Thyroid gland (tissue), 4 donors: ENCODE measurements at regions of chr17 and their contacts with region 1.

Region 1: DNA sequence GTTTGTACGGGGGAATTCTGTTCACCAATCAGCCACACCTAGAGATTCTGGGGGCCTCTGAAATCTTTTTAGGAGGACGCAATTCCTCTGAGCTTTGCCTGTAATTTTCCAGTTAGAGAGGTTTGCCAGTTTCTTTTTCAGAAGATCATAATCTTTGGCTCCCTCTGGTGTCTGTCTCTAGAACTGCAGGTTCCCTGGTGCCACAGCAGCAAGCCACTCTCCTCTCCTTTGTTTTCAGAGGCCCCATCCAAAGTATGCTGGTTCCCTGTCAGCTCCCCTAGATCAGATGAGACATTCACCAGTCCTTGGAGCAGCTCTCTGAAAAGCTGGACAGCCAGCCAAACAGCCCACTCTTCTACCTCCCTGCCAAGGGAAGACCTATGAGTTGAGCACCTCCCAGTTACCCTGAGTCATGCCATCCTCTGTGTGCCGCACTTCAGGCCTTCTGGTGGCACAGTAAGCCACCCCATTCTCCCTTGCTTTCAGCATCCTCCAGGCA is 36.1 kb downstream of the RNF112 start:
- DNase-seq: peak; percentile 69
- H3K4me3 ChIP-seq: no peak overlapping the region
- H3K27ac ChIP-seq: peak overlapping the region in 2 of 3 donors; percentile 21 to 22
- H3K4me1 ChIP-seq: no peaks in the 10 kb centered on the region
- H3K27me3 ChIP-seq: no peaks in the 10 kb centered on the region
- CTCF ChIP-seq: peak; percentile 80 to 96 (median 92)
- POLR2A ChIP-seq: no peak

Region 2: DNA sequence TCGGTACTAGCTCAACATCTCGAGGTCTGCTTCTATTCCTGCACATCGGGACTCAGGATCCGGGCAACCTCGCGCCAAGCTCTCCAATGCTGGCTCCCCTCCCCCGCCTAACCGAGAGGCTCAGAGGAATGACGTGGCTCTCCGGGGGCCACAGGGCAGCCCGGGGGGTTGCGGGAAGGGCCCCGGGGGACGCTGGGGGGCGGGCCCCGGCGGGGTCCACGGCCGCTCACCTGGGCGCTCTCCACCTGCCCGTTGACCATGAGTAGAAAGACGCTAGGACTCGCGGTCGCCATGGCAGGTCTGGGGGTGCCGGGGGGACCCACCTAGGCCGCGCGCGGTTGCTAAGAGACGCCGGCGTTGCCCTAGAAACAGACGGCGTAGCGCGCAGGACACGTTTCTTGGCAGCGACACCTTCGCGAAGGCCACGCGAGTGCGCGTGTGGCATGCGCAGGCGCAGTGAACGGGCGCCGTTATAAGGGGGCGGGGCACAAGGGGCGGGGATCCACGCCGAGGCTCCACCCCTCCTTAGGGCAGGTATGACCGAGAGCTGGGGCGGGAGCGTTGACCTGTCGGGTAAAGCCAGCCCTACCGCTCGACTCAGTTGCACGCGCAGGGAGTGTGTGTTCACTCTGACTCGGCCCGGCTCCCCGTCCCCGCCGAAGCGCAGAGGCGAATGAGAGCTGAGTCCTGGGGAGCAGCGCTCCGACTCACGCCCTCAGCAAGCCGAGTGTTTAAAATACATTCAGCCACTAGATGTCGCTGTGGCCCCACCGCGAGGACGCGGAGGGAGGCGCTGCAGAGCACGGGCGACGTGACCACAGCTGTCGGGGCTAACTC is 84.6 kb before region 1 on chr17 and contains the start of gene B9D1:
- intact Hi-C with region 1: loop called (anchors 5 kb)
- DNase-seq: peak; percentile 93 to 94
- H3K4me3 ChIP-seq: peak within 1 kb of the TSS; percentile 43 to 66 (median 63)
- H3K27ac ChIP-seq: peak within 1 kb of the TSS; percentile 75 to 93 (median 92)
- H3K4me1 ChIP-seq: peaks cover 12 to 13% of the 10 kb centered on the region in 2 donors
- H3K27me3 ChIP-seq: no peaks in the 10 kb centered on the region
- CTCF ChIP-seq: peak in 5 of 6 experiments; percentile 98 to 100 (median 99)
- POLR2A ChIP-seq: peak in 1 of 2 donors; percentile 70
- total RNA-seq, gene B9D1: 45.0 to 104 (median 90.3) TPM

Region 3: DNA sequence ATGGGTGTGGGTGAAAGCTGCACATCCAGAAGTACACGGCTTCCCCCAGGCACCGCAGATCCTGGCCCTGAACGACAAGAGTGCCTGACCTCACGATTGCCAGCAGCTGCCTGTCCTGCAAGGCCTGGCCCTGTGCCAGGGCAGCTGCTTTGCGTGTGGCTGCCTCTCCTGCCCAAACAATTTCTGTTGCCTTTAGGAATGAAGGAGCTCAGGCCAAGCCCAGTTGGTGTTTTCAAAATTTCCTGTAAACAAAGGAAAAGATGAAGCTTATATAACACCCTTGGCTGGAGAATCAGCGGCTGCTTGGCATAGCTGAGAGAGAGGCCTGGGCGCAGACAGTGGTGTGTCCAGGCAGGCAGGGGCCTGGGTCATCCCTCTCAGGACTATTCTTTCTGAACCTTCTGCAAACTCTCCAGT is 281.0 kb after region 1 on chr17:
- intact Hi-C with region 1: no loop called
- DNase-seq: peak; percentile 97 to 98
- H3K4me3 ChIP-seq: no peak overlapping the region
- H3K27ac ChIP-seq: peak overlapping the region; percentile 97 to 99 (median 97)
- H3K4me1 ChIP-seq: peaks cover 25 to 49% of the 10 kb centered on the region in 2 donors
- H3K27me3 ChIP-seq: no peaks in the 10 kb centered on the region
- CTCF ChIP-seq: no peak
- POLR2A ChIP-seq: peak in 1 of 2 donors; percentile 18